ENCODE measurements at regions of chr1 and their contacts with region 1.

Region 1: DNA sequence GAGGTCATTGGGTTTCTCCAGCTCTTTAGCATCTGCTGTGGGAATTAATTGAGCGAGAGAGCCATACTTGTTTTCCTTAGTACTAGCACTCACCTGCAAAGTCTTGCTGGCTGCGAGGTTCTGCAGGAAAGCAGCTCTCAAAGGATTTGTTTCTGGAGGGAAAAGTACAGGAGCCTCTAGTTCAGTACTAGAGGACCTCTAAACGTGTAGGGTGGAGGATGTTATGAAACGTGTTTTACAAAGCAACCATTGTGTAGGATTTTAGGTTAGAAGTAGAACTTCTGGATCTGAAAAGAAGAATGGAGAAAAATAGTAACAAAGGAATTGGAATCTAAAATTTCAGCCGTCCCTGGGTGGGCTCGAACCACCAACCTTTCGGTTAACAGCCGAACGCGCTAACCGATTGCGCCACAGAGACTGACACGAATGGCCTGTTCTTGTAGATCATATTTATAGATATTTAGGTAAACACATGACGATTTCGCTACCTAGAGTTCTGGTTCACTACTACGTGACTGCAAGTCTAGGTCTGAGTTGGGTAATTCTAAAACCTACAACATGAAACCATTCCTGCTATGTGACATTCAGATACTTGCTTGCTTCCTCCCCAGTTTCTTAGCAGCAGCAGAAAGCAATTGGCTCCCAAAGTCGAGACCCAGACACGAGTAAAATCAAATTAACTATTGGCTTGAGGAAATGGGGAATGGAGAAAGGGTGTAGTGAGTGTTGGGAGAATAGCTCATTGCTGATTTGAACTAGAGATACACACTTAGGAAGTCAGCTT is 60.2 kb upstream of the CFAP126 start:
- DNase-seq: peak; percentile 52
- H3K4me3 Mint-ChIP-seq: peak overlapping the region; percentile 57
- H3K27ac Mint-ChIP-seq: peak overlapping the region; percentile 60
- H3K4me1 Mint-ChIP-seq: peaks cover 11% of the 10 kb centered on the region
- H3K27me3 Mint-ChIP-seq: peaks cover 27% of the 10 kb centered on the region

Region 2: GRCh38 chr1:161139765-161140164 is 288.2 kb before region 1 on chr1:
- CTCF ChIA-PET with region 1: no interaction called
- intact Hi-C with region 1: no loop called
- DNase-seq: peak; percentile 71
- H3K4me3 Mint-ChIP-seq: no peak overlapping the region
- H3K27ac Mint-ChIP-seq: no peak overlapping the region
- H3K4me1 Mint-ChIP-seq: peaks cover 4% of the 10 kb centered on the region
- H3K27me3 Mint-ChIP-seq: no peaks in the 10 kb centered on the region

Region 3: DNA sequence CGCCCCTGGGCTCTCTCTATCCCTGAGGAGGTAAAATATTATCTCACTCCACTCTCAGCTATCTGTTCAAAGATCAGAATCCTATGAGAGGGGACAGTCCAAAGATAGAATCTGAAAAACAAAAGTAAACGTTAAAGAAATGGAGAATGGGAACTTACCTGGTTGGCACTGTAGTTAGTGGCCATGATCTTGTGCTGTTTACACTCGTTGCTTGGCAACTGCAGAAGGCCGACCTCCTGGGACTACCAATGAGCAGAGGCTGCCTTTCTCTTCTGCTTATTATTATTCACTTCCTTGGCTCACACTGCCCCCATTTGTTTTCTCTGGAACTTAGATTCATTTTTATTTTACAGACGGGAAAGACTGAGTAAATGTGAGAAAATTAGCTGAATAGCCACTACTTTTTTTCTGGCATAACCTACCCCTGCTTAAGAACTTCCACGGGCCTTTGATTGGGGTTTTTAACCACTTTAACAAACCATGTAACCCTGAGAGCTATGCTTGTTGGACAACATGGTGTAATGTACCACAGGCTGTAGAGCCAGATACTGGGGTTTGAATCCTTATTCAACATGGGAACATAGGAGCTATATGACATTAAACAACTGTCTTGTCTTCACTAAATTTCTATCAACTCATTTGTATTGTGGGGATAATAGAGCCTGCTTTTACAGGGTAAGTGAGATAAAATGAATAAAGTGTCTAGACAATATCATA is 60.1 kb before region 1 on chr1 and contains the start of gene CFAP126:
- CTCF ChIA-PET with region 1: no interaction called
- intact Hi-C with region 1: no loop called
- DNase-seq: peak; percentile 61
- H3K4me3 Mint-ChIP-seq: no peak within 1 kb of the TSS
- H3K27ac Mint-ChIP-seq: no peak within 1 kb of the TSS
- H3K4me1 Mint-ChIP-seq: peaks cover 12% of the 10 kb centered on the region
- H3K27me3 Mint-ChIP-seq: no peaks in the 10 kb centered on the region
- total RNA-seq, gene CFAP126: not detected

Region 4: GRCh38 chr1:161408429-161409052 is 19.4 kb before region 1 on chr1:
- CTCF ChIA-PET with region 1: no interaction called
- intact Hi-C with region 1: loop called (anchors 2 kb)
- DNase-seq: no peak
- H3K4me3 Mint-ChIP-seq: no peak overlapping the region
- H3K27ac Mint-ChIP-seq: no peak overlapping the region
- H3K4me1 Mint-ChIP-seq: peaks cover 30% of the 10 kb centered on the region
- H3K27me3 Mint-ChIP-seq: peaks cover 3% of the 10 kb centered on the region

Region 5: DNA sequence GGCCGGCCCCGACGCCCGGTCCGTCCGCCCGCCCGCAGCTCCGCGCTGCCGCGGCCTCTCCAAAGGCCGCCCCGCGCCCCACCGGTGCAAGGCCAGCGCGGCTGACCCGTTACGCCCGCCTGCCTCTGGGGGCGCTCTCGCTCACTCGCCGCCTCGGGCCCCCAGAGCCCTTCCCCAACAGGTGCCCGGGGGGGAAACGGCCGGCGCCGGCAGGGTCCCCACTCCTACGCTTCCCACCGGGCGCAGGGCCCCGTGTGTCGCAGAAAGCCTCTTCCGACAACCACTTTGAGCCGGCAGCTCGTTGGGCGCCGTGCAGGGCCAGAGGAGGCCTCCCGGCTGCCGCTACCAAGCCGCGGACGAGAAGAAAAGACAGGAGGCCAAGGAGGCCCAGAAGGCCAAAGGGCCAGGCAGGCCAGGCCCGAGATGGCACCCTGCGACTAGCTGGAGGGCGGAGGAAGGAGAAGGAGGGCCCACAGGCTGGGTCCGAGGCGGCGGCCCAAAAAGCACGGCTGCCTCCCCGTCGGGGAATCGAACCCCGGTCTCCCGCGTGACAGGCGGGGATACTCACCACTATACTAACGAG is 12.5 kb after region 1 on chr1:
- CTCF ChIA-PET with region 1: interaction called, 19 read pairs
- intact Hi-C with region 1: no loop called
- DNase-seq: peak; percentile 73
- H3K4me3 Mint-ChIP-seq: peak overlapping the region; percentile 85
- H3K27ac Mint-ChIP-seq: peak overlapping the region; percentile 83
- H3K4me1 Mint-ChIP-seq: peaks cover 5% of the 10 kb centered on the region
- H3K27me3 Mint-ChIP-seq: peaks cover 27% of the 10 kb centered on the region